ENCODE measurements at regions of chr18 and their contacts with region 1.

Region 1: DNA sequence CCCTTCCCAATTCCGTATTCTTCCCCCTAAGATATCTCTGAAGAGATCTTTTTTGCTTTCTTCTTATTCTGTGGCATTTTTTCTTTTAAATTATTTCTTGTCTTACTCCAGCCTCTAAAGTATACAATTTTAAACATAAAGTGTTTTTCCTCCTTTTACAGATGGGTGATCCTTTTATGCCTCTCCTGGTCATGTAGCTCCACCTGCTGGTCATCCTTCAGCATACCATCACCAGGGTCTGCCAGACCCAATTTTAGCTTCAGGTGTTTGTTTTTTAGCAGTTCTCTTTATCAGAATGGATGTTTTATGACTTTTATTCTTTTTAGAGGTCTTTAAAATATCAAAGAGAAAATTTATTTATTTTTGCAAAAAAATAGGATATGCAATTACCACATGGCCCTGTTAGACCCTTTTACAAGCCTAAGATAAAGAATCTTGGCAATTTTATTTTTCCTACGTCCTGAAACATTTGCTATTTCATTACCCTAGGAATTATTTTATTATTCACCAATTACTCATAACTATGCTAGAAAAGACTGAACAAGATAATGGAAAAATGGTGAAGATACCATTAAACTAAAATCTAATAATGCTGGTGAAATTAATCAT is 55.5 kb downstream of the PIGN start:
- DNase-seq: no peak
- H3K4me3 ChIP-seq: no peak overlapping the region
- H3K27ac ChIP-seq: no peak overlapping the region
- H3K27me3 ChIP-seq: no peaks in the 10 kb centered on the region
- CTCF ChIP-seq: peak; percentile 97

Region 2: GRCh38 chr18:61322265-61322873 is 809.0 kb before region 1 on chr18:
- CTCF ChIA-PET with region 1: interaction called, 18 read pairs
- POLR2A ChIA-PET with region 1: no interaction called
- DNase-seq: peak; percentile 8
- H3K4me3 ChIP-seq: no peak overlapping the region
- H3K27ac ChIP-seq: no peak overlapping the region
- H3K27me3 ChIP-seq: no peaks in the 10 kb centered on the region
- CTCF ChIP-seq: peak; percentile 98

Region 3: GRCh38 chr18:61551586-61551985 is 579.8 kb before region 1 on chr18:
- CTCF ChIA-PET with region 1: interaction called, 28 read pairs
- POLR2A ChIA-PET with region 1: no interaction called
- DNase-seq: peak; percentile 82
- H3K4me3 ChIP-seq: no peak overlapping the region
- H3K27ac ChIP-seq: no peak overlapping the region
- H3K27me3 ChIP-seq: no peaks in the 10 kb centered on the region
- CTCF ChIP-seq: peak; percentile 97

Region 4: GRCh38 chr18:61635901-61636528 is 495.4 kb before region 1 on chr18:
- CTCF ChIA-PET with region 1: interaction called, 11 read pairs
- POLR2A ChIA-PET with region 1: interaction called, 4 read pairs
- DNase-seq: peak; percentile 11
- H3K4me3 ChIP-seq: no peak overlapping the region
- H3K27ac ChIP-seq: no peak overlapping the region
- H3K27me3 ChIP-seq: no peaks in the 10 kb centered on the region
- CTCF ChIP-seq: peak; percentile 96

Region 5: DNA sequence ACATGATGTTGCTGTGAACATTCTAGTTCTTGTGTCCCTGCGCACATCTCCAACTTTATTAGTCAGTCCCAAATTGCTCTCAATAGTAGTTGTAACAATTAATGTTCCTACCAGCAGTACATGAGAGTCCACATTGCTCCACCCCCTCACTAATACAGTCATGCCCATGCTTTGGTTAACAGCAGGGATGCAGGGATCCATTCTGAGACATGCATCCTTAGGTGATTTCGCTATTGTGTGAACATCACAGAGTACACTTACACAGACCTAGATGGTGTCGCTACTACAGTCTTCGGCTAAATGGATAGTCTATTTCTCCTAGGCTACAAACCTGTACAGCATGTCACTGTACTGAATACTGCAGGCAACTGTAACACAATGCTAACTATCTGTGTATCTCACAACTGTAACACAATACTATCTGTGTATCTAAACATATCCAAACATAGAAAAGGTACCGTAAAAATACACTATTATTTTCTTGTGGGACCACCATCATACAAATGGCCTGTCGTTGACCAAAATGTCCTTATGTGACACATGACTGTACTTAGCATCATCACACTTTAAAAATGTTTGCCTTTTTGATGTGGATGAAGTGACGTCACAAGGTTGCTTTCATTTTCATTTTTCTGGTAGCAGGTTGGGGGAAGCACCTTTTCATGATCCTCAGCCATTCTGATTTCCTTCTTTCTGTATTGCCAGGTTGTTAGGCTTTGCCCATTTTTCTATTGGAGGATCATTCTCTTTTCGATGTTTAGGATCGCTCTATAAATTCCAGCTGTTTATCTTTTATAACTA is 155.7 kb before region 1 on chr18:
- CTCF ChIA-PET with region 1: no interaction called
- POLR2A ChIA-PET with region 1: no interaction called
- DNase-seq: no peak
- H3K4me3 ChIP-seq: no peak overlapping the region
- H3K27ac ChIP-seq: no peak overlapping the region
- H3K27me3 ChIP-seq: no peaks in the 10 kb centered on the region
- CTCF ChIP-seq: no peak

Measured in AG04450 (cell line).